Activated CD4-positive, alpha-beta T cell treated with anti-CD3 and anti-CD28 coated beads, Interleukin-2, amount 10 ng/mL, durations not matched to agents 7 days and 5 days (primary cell): ENCODE measurements at regions of chr3 and their contacts with region 1.

Region 1: DNA sequence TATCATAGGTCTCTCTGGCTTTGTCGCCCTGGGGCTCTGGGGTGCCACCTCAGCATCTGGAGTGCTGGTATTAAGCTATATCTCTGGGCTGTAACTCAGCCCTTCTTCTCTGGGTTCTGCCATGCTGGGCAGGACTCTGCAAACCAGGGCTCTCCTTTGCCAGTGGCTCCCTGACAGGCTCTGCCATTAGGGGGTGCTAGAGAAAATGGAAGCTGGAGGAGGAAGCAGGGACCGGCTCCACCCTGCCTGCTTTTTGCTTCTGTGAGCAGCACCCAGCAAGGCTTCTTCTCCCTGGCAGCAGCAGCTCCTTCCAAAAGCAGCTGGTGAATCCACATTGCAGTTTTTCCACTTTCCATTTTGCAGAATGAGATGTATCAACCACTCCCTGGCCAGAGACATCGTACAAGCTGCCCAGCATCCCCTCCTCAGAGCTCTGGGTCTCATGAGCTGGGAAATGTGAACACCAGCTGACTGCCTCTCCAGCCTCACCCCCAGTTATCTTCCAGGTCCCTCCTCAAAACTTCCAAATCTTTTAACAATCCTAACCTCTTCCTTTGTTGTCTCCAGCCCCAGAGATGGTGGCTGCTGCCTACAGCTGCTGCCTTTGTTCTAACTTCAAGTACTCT is 165.0 kb downstream of the ABHD5 start:
- DNase-seq: peak; percentile 59
- H3K4me3 Mint-ChIP-seq: no peak overlapping the region
- H3K27ac Mint-ChIP-seq: no peak overlapping the region
- H3K4me1 Mint-ChIP-seq: no peaks in the 10 kb centered on the region
- H3K27me3 Mint-ChIP-seq: peaks cover 47% of the 10 kb centered on the region

Region 2: GRCh38 chr3:43748179-43748578 is 107.6 kb before region 1 on chr3:
- CTCF ChIA-PET with region 1: no interaction called
- POLR2A ChIA-PET with region 1: no interaction called
- DNase-seq: no peak
- H3K4me3 Mint-ChIP-seq: no peak overlapping the region
- H3K27ac Mint-ChIP-seq: peak overlapping the region; percentile 9
- H3K4me1 Mint-ChIP-seq: no peaks in the 10 kb centered on the region
- H3K27me3 Mint-ChIP-seq: peaks cover 2% of the 10 kb centered on the region

Region 3: DNA sequence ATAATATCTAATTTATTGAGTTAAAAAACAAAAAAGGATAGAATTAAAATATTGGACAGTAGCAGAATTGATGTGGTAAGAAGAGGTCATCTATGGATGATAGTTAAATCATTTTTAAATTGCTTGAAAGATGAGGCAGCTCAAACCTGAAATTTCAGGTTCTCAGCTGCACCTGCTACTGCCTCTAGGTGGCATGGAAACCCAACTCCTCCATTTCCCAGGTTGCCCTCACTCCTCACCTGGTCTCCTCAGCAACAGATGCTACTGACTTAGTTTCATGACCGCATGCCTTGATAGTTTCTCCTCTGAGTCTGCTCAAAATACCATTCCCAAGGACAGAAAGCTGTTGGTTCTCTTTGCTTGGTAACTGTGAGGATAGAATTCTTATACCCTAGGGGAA is 16.9 kb before region 1 on chr3:
- CTCF ChIA-PET with region 1: no interaction called
- POLR2A ChIA-PET with region 1: no interaction called
- DNase-seq: no peak
- H3K4me3 Mint-ChIP-seq: no peak overlapping the region
- H3K27ac Mint-ChIP-seq: no peak overlapping the region
- H3K4me1 Mint-ChIP-seq: no peaks in the 10 kb centered on the region
- H3K27me3 Mint-ChIP-seq: peaks cover 3% of the 10 kb centered on the region

Region 4: DNA sequence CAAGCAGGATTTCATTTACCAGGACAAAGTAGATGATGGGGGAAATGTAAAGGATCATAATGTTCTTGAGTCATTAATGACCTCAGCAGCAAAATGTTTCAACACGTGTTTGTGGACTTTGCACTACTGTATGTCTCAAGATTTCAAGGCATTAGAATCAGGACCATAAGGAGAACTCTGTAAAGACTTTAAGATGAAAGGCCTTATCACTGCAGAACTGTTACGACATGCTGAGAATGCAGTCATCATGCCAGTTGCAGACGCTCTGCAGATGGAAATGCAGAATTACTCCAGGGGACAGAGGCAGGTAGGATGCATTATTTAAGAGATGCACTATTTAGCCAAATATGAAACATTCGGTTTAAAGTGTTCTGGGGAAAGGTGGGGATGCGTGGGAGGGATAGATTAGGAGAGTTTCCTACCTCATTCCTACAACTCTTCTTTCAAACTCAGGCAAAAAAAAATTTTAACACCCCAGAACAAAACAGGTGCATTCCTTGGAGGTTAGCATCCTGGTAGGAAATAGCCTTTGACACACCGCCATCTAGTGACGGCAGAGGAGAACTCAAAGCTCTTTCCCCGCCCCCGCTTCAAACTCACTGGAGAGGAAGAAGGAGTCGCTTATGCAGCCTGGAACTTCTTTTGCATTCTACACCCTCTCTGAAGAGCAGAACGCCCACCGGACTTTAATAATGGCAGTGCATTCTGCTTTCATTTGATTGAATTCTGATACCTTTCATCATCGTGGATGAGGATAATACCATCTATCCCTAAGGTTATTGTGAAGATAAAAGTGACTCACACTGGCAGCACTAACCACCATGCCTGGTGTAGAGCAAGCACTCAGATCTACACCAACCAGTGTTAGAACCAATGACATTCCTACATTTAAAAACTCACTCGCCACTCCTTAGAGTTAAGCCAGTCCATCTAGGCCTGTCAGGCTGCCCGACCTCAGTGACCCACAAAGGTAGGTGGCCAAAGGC is 342.8 kb after region 1 on chr3:
- CTCF ChIA-PET with region 1: interaction called, 10 read pairs
- POLR2A ChIA-PET with region 1: no interaction called
- DNase-seq: peak; percentile 80
- H3K4me3 Mint-ChIP-seq: no peak overlapping the region
- H3K27ac Mint-ChIP-seq: no peak overlapping the region
- H3K4me1 Mint-ChIP-seq: peaks cover 3% of the 10 kb centered on the region
- H3K27me3 Mint-ChIP-seq: peaks cover 36% of the 10 kb centered on the region